ENCODE measurements at regions of chr2 and their contacts with region 1.

Region 1: DNA sequence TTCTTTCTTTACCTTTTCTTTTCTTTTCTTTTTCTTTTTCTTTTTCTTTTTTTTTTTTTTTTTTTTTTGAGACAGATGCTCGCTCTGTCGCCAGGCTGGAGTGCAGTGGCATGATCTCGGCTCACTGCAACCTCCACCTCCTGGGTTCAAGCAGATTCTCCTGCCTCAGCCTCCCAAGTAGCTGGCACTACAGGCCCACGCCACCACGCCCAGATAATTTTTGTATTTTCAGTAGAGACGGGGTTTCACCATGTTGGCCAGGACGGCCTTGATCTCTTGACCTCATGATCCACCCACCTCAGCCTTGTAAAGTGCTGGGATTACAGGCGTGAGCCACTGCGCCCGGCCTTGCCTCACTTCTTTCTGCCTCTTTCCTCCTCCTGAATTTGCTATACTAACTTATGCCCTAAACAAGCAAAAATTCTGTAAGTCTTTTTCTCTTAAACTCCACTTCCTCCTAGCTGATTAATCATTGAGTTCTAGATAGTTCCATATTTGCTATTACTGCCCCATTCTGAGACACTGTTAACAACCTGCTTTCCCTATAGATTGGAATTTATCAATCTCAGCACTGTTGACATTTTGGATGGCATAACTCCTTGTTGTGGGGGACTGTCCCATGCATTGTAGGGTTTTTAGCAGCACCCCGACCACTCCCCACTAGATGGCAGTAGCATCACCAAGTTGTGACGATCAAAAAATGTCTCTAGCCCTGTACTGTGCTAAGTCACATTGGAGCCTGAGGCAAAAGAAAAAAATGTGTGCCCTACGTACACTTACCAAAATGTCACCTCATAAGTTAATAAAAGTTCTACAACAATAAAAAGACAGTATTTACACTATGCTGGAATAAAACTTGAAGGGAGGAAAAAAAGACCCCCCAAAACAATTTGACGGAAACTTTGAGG is 16.4 kb upstream of the THADA start:
- DNase-seq: peak; percentile 72 to 81
- H3K4me3 ChIP-seq: no peak overlapping the region
- H3K4me1 ChIP-seq: peaks cover 3% of the 10 kb centered on the region
- H3K27me3 ChIP-seq: no peaks in the 10 kb centered on the region

Region 2: DNA sequence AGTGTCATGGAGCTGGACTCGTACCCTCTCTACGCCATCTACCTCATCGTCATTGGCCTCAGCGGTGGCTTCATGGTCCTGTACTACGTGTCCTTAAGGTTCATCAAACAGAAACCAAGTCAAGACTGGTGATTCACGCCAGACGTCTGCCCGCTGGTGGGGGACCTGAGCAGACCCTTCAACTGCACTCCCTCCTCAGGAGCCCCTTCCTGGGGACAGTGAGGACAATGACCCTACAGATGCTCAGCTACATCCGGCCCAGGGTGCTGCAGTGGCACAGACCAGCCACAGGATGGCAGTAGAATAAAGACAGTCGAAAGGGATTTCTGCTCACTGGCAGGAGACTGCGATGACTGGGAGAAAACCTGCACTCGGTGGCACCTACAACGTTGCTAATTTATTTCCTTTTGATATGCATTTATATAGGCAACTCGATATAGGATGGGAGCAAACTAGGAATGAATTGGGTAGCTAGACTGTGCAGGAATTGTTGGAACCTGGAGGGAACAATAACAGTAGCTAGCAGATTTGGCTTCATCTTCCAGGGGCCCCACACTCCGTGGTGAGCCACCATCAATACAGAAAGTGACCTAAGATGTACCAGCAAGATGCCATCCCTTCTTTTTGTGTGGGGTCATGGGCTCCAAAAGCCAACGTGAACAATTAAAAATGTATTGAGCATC is 265.7 kb after region 1 on chr2:
- in situ Hi-C with region 1: loop called (anchors 10 kb)
- DNase-seq: peak; percentile 77 to 87
- H3K4me3 ChIP-seq: no peak overlapping the region
- H3K4me1 ChIP-seq: peaks cover 4% of the 10 kb centered on the region
- H3K27me3 ChIP-seq: 0 out of 2 replicates have a peak, but pooled peaks cover under 1% of the 10 kb centered on the region

Region 3: GRCh38 chr2:43889416-43889815 is 277.2 kb after region 1 on chr2:
- in situ Hi-C with region 1: no loop called
- DNase-seq: peak; percentile 83 to 90
- H3K4me3 ChIP-seq: no peak overlapping the region
- H3K4me1 ChIP-seq: peaks cover 31% of the 10 kb centered on the region
- H3K27me3 ChIP-seq: no peaks in the 10 kb centered on the region